Posterior cingulate gyrus (tissue), 11 donors: ENCODE measurements at regions of chr5 and their contacts with region 1.

Region 1: GRCh38 chr5:73902327-73903051 is 276.5 kb downstream of the ARHGEF28 start:
- DNase-seq: peak in 4 of 10 donors; percentile 27 to 84 (median 80)

Region 2: GRCh38 chr5:74648835-74649293 is 746.4 kb after region 1 on chr5:
- intact Hi-C with region 1: loop called (anchors 1 kb)
- DNase-seq: peak in 1 of 10 donors; percentile 77

Region 3: GRCh38 chr5:74903165-74903787 is 1000.8 kb after region 1 on chr5:
- intact Hi-C with region 1: loop called (anchors 10 kb)
- DNase-seq: peak in 2 of 10 donors; percentile 11 to 51